Calu3 (cell line): ENCODE measurements at regions of chr4 and their contacts with region 1.

Region 1: GRCh38 chr4:56301181-56302076 is 85.9 kb downstream of the AASDH start:
- DNase-seq: peak; percentile 70
- H3K4me3 Mint-ChIP-seq: no peak overlapping the region
- H3K27ac Mint-ChIP-seq: no peak overlapping the region
- H3K4me1 Mint-ChIP-seq: peaks cover 10% of the 10 kb centered on the region
- H3K27me3 Mint-ChIP-seq: no peaks in the 10 kb centered on the region
- CTCF ChIP-seq: peak; percentile 61

Region 2: DNA sequence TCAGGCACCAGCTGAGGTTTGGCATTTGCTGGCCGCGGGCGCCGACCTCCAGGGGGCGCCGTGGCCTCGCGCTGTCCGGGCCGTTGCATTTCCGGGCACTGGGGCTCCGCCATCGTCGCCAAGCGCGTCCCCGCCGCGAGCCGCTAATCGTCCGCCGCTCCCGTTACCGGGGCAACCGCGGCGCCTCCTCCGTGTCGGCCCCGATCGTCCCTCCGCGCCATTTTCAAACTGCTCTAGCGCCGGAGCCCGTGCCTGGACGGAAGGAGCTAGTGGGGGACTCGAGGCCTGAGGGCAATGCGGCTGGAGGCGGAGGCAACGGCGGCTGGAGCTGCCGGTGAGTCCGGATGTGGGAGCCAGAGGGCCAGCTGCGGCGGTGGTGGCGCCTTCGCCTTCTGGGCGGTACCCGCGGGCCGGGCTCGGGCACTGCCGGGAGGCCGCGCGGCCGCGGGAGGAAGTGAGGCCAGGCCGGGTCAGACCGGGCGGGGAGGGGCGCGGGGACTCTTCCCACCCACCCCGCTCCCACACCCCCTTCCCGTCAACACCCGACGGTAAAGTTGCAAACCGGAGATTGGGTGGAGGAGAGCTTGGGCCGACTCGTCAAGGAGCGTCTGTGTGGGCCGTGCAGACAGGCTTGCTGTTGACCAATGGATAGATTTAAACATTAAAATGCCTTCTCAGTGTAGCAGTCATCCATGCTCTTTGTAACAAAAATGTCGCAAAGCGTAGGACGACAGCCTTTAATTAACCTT is 352.5 kb before region 1 on chr4 and contains the start of gene CEP135:
- CTCF ChIA-PET with region 1: interaction called, 3 read pairs
- intact Hi-C with region 1: loop called (anchors 1 kb)
- DNase-seq: peak; percentile 92
- H3K4me3 Mint-ChIP-seq: peak within 1 kb of the TSS; percentile 77
- H3K27ac Mint-ChIP-seq: peak within 1 kb of the TSS; percentile 86
- H3K4me1 Mint-ChIP-seq: peaks cover 16% of the 10 kb centered on the region
- H3K27me3 Mint-ChIP-seq: no peaks in the 10 kb centered on the region
- CTCF ChIP-seq: peak; percentile 82
- total RNA-seq, gene CEP135: 8.0 and 9.4 TPM in 2 replicates

Region 3: DNA sequence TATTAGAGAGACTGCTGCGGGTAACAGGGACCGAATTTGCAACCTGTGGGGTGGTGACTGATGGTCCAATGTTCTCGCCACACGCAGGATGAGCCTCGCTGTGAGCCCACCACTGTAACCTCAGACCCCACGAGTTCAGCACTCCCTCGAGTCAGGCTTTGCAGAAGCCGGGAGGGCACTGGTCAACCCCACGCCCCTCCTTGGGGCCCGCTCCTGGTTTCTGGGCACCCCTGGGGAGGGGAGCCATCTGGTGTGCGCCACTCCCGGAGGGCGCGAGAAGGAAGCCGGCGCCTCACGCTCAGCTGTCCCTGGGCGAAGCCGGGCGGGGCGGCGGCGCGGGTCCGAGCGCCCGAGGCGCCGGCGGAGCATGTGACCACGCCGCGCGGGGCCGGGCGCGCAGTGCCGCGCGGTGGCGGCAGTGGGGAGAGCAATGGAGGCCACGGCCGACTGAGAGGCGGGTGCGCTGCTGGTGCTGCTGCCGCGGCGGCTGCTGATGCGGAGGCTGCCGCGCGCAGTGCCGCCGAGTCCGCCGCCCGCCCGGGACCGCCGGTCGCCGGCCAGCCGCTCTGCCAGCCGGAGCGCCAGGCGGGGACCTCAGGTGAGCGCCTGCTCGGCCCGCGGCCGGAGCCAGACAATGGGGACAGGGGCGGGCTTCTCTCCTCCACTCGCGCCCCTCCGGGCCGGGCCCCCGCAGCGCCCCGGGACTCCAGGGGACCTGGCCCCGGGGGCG is 252.6 kb before region 1 on chr4:
- CTCF ChIA-PET with region 1: no interaction called
- intact Hi-C with region 1: loop called (anchors 2 kb)
- DNase-seq: peak; percentile 68
- H3K4me3 Mint-ChIP-seq: peak overlapping the region; percentile 89
- H3K27ac Mint-ChIP-seq: no peak overlapping the region
- H3K4me1 Mint-ChIP-seq: peaks cover 9% of the 10 kb centered on the region
- H3K27me3 Mint-ChIP-seq: no peaks in the 10 kb centered on the region
- CTCF ChIP-seq: no peak

Region 4: GRCh38 chr4:56129431-56129861 is 172.0 kb before region 1 on chr4:
- CTCF ChIA-PET with region 1: interaction called, 4 read pairs
- intact Hi-C with region 1: loop called (anchors 1 kb)
- DNase-seq: peak; percentile 78
- H3K4me3 Mint-ChIP-seq: no peak overlapping the region
- H3K27ac Mint-ChIP-seq: peak overlapping the region; percentile 12
- H3K4me1 Mint-ChIP-seq: peaks cover 23% of the 10 kb centered on the region
- H3K27me3 Mint-ChIP-seq: no peaks in the 10 kb centered on the region
- CTCF ChIP-seq: peak; percentile 70

Region 5: GRCh38 chr4:56220261-56220660 is 81.2 kb before region 1 on chr4:
- CTCF ChIA-PET with region 1: no interaction called
- intact Hi-C with region 1: no loop called
- DNase-seq: no peak
- H3K4me3 Mint-ChIP-seq: no peak overlapping the region
- H3K27ac Mint-ChIP-seq: no peak overlapping the region
- H3K4me1 Mint-ChIP-seq: peaks cover 29% of the 10 kb centered on the region
- H3K27me3 Mint-ChIP-seq: no peaks in the 10 kb centered on the region
- CTCF ChIP-seq: no peak

Region 6: GRCh38 chr4:56240554-56241174 is 60.8 kb before region 1 on chr4:
- CTCF ChIA-PET with region 1: no interaction called
- intact Hi-C with region 1: loop called (anchors 2 kb)
- DNase-seq: no peak
- H3K4me3 Mint-ChIP-seq: peak overlapping the region; percentile 24
- H3K27ac Mint-ChIP-seq: peak overlapping the region; percentile 33
- H3K4me1 Mint-ChIP-seq: peaks cover 36% of the 10 kb centered on the region
- H3K27me3 Mint-ChIP-seq: no peaks in the 10 kb centered on the region
- CTCF ChIP-seq: no peak

Region 7: DNA sequence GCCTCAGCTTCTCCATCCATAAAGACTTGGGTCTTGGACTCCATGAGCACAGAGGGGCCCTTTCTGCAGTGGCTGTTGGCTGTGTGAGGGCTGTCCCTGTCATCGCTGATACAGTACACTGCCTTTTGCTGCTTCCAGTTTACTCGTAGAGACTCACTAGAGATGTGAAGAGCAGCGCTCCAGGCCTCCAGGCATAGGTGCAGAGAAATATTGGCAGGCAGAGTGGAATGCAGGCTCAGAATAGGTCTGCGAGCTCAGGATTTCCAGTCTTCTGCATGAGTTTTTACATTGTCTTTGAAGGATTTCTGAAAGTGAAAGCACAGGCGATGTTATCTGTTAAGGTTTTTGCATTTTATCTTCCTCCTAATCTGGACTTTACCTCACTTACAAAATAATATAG is 11.5 kb before region 1 on chr4:
- CTCF ChIA-PET with region 1: no interaction called
- intact Hi-C with region 1: no loop called
- DNase-seq: peak; percentile 5
- H3K4me3 Mint-ChIP-seq: peak overlapping the region; percentile 62
- H3K27ac Mint-ChIP-seq: no peak overlapping the region
- H3K4me1 Mint-ChIP-seq: peaks cover 20% of the 10 kb centered on the region
- H3K27me3 Mint-ChIP-seq: no peaks in the 10 kb centered on the region
- CTCF ChIP-seq: no peak